ENCODE measurements at regions of chr12 and their contacts with region 1.

Region 1: DNA sequence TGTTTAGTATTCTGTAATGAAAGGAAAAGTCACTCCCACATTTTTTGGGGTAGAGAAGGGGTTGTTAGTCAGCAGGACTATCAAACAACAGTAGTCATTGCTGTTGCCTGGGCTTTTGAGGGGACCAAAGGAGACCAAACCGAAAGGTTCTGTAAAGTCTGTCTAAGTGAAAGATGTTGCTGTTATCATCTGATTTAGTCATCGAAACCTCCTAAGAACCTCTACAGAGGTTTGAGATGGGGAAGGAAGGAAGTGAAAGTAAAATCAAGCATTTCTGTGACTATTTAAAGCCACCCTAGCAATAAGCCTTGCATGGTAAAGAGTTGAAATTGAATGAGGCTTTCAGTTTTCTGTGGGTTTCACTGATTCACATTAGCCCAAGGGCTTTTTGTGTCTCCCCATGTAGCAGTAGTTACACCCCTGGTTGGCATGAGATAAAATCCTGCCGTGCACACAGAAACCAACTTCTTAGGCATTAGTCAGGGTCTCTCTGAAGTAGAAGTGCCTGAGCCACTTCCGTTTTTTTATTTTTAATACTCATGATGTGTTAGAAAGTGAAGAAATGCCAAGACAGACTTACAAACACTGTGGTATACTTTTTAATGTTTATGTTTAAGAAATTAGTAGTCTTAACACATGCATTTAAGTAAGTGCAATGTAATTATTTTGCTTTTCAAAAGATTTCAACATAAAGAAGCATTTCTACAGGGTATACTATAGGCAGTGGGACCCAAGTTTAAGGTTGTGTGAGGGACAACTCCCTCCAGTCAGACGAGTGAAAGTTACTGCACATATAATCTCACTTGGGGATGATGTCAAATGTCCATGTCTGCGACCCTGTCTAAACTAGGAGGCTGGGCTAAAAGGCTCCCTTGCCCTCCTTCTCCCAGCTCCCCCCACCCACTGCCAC is 50.4 kb downstream of the DYRK2 start:
- DNase-seq: peak; percentile 83
- H3K4me3 Mint-ChIP-seq: peak overlapping the region; percentile 70
- H3K27ac Mint-ChIP-seq: peak overlapping the region; percentile 65
- H3K4me1 Mint-ChIP-seq: peaks cover 40% of the 10 kb centered on the region
- H3K27me3 Mint-ChIP-seq: peaks cover 58% of the 10 kb centered on the region

Region 2: DNA sequence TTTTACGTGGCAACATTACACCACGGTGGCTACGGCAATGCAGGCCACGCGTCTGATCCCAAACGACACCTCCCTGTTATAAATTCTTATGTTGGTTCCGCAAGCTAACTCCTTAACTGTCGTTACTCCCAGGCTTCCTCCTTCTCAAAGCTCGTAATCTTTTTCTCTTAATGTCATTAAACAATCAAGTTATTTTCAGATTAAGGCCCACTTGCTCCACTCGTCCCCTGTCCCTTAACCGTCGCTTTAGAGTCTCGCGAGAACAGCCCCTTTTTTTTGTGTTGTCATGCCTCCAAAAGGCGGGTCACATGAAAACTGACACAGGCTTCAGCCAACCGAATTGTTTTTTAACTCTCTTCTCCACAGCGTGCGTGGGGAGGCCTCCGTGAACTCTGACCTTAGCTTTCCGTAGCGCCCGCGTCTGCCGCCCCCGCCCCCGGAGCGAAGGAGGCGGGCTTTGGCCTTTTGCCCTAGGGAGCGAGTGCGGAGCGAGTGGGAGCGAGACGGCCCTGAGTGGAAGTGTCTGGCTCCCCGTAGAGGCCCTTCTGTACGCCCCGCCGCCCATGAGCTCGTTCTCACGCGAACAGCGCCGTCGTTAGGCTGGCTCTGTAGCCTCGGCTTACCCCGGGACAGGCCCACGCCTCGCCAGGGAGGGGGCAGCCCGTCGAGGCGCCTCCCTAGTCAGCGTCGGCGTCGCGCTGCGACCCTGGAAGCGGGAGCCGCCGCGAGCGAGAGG is 429.9 kb before region 1 on chr12 and contains the start of gene CAND1:
- intact Hi-C with region 1: loop called (anchors 1 kb)
- DNase-seq: peak; percentile 99
- H3K4me3 Mint-ChIP-seq: peak within 1 kb of the TSS; percentile 90
- H3K27ac Mint-ChIP-seq: peak within 1 kb of the TSS; percentile 100
- H3K4me1 Mint-ChIP-seq: peaks cover 30% of the 10 kb centered on the region
- H3K27me3 Mint-ChIP-seq: no peaks in the 10 kb centered on the region
- total RNA-seq, gene CAND1: 202 and 216 TPM in 2 replicates

Region 3: DNA sequence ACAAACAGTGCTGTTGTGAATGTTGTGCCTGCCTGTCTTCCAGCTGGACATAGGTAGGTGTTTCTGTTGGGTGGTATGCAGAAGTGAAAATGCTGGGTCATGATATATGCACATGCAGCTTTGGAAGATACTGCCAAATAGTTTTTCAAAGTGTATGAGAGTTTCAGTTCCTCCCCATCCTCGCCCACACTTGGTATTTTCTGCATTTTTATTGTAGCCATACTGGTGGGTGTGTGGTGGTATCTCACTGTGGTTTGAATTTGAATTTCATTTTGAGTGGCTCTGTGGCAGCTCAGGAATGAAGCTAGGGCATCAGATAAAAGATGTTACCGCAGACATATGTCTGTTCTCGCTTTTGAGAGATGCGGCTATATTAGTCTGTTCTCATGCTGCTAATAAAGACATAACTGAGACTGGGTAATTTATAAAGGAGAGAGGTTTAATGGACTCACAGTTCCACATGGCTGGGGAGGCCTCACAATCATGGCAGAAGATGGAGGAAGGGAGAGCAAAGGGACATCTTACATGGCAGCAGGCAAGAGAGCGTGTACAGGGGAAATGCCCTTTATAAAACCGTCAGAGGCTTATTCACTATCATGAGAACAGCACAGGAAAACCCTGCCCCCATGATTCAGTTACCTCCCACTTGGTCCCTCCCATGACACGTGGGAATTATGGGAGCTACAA is 246.7 kb before region 1 on chr12:
- intact Hi-C with region 1: loop called (anchors 2 kb)
- DNase-seq: no peak
- H3K4me3 Mint-ChIP-seq: peak overlapping the region; percentile 16
- H3K27ac Mint-ChIP-seq: peak overlapping the region; percentile 85
- H3K4me1 Mint-ChIP-seq: peaks cover 40% of the 10 kb centered on the region
- H3K27me3 Mint-ChIP-seq: peaks cover 44% of the 10 kb centered on the region

Region 4: GRCh38 chr12:67592216-67593011 is 106.5 kb before region 1 on chr12:
- intact Hi-C with region 1: loop called (anchors 2 kb)
- DNase-seq: peak; percentile 82
- H3K4me3 Mint-ChIP-seq: peak overlapping the region; percentile 41
- H3K27ac Mint-ChIP-seq: peak overlapping the region; percentile 74
- H3K4me1 Mint-ChIP-seq: peaks cover 42% of the 10 kb centered on the region
- H3K27me3 Mint-ChIP-seq: peaks cover 4% of the 10 kb centered on the region

Region 5: DNA sequence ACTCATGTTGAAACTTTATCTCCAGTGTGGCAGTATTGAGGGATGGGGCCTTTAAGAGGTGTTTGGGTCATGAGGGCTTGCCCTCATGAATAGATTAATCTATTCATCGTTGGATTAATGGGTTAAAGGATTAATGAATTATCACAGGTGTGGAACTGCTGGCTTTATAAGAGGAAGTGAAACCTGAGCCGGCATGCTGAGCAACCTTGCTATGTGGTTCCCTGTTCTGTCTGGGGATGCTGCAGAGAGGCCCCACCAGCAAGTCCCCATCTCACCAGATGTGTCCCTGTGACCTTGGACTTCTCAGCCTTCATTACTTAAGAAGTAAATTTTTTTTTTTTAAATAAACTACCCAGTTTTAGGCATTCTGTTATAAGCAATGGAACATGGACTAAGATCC is 59.2 kb after region 1 on chr12:
- intact Hi-C with region 1: loop called (anchors 2 kb)
- DNase-seq: no peak
- H3K4me3 Mint-ChIP-seq: no peak overlapping the region
- H3K27ac Mint-ChIP-seq: no peak overlapping the region
- H3K4me1 Mint-ChIP-seq: peaks cover 2% of the 10 kb centered on the region
- H3K27me3 Mint-ChIP-seq: peaks cover 1% of the 10 kb centered on the region

Region 6: GRCh38 chr12:67804168-67804567 is 105.2 kb after region 1 on chr12:
- intact Hi-C with region 1: loop called (anchors 1 kb)
- DNase-seq: peak; percentile 80
- H3K4me3 Mint-ChIP-seq: no peak overlapping the region
- H3K27ac Mint-ChIP-seq: no peak overlapping the region
- H3K4me1 Mint-ChIP-seq: peaks cover 11% of the 10 kb centered on the region
- H3K27me3 Mint-ChIP-seq: peaks cover 8% of the 10 kb centered on the region

Region 7: DNA sequence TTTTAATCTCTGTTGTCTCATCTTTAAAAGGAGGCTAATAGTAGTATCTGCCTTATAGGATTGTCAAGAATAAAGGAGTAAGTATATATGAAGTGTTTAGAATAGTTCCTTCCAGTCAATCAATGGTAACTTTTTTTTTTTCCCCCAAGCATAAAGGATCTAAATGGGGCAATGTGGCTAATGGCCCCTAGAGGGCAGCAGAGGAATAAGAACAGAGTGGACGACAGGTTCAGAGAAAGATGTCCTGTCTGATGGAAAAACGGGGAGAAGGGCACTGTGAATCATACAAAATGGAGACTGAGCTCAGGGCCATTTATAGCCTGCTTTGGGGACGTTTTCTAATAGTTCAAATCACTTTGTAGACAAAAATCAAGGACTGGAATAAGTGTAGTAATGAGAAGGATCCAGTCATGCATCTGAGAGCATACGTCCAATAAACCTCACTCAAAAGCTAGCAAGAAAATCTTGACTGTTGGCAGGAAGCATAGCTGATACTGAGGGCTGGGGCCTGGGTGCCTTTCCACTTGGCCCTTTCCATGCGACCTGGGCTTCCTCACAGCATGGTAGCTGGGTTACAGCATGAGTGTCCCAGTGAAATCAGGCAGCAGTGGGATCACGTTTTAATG is 341.6 kb after region 1 on chr12:
- intact Hi-C with region 1: no loop called
- DNase-seq: peak; percentile 89
- H3K4me3 Mint-ChIP-seq: no peak overlapping the region
- H3K27ac Mint-ChIP-seq: peak overlapping the region; percentile 78
- H3K4me1 Mint-ChIP-seq: peaks cover 42% of the 10 kb centered on the region
- H3K27me3 Mint-ChIP-seq: no peaks in the 10 kb centered on the region

Region 8: GRCh38 chr12:68267892-68268396 is 569.0 kb after region 1 on chr12:
- intact Hi-C with region 1: loop called (anchors 10 kb)
- DNase-seq: peak; percentile 79
- H3K4me3 Mint-ChIP-seq: peak overlapping the region; percentile 29
- H3K27ac Mint-ChIP-seq: peak overlapping the region; percentile 73
- H3K4me1 Mint-ChIP-seq: peaks cover 45% of the 10 kb centered on the region
- H3K27me3 Mint-ChIP-seq: peaks cover 8% of the 10 kb centered on the region

Measured in activated CD4-positive, alpha-beta T cell treated with anti-CD3 and anti-CD28 coated beads, Interleukin-2, amount 10 ng/mL, durations not matched to agents 24 days and 14 days (primary cell).